ENCODE measurements at regions of chr18 and their contacts with region 1.

Region 1: GRCh38 chr18:46155641-46156051 is 51.5 kb downstream of the HAUS1 start:
- DNase-seq: peak; percentile 75 to 99
- H3K4me3 ChIP-seq: no peak overlapping the region
- H3K27ac ChIP-seq: peak overlapping the region; percentile 85
- H3K4me1 ChIP-seq: peaks cover 94% of the 10 kb centered on the region
- H3K27me3 ChIP-seq: no peaks in the 10 kb centered on the region
- CTCF ChIP-seq: no peak

Region 2: DNA sequence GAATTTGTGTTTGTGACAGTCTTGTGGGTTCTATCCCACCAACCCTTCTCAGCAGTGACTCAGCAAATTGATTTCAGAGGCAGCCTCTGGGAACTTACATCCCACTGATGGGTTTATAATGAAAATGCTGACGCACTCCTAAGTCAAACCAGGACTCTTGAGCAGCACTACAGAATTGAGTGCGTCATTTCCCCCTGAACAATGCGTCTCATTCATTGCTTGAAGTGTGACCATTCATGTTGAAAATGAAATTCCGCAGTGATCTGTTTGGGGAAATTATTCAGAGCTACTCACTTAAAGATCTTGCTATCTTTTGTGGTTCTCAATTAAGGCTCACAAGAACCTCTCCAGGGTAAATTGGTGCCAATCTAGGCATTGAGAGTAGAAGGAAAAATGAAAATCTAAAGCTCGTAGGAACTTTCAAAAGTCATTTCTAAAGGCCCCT is 958.1 kb before region 1 on chr18:
- CTCF ChIA-PET with region 1: no interaction called
- POLR2A ChIA-PET with region 1: no interaction called
- intact Hi-C with region 1: no loop called
- DNase-seq: no peak
- H3K4me3 ChIP-seq: no peak overlapping the region
- H3K27ac ChIP-seq: no peak overlapping the region
- H3K4me1 ChIP-seq: no peaks in the 10 kb centered on the region
- H3K27me3 ChIP-seq: no peaks in the 10 kb centered on the region
- CTCF ChIP-seq: no peak

Region 3: DNA sequence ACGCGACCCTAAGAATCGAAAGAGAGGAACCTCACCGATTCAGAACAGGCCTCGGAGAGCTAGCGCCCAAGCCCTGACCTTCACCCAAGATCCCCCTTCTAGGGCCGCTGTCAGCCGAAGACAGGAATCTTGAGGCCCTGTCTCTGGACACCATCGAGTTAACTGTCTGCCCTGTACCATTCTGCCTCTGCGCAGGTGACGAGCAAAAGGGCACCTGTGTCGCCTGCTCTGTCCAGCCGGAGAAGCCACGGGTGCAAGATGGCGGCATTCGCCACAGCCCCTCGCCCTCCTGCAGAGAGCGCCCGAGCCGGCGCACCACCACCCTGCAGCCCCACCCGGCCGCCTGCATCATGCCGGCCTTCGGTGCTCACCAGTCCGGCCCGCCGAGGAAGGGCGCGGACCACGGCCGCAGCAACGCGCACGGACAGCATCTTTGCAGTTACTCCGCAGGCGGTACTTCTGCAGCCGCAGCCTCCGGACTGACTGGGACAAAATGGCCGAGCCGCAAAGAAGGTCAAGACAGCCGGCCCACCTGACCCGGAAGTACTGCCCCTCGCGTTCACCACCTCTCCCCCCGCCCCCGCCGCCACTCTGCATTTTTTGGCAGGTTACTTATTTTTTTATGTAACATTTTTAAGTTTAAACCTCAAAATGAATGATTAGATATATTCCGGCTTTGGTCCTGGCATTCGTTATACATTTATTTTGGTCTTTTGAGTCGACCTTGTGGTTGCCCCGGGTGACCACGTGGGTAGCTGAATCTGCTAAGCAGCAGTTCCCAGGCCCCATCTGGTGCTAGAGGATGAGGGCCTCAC is 57.6 kb before region 1 on chr18 and contains the start of gene ATP5F1A:
- CTCF ChIA-PET with region 1: no interaction called
- POLR2A ChIA-PET with region 1: interaction called, 27 read pairs
- intact Hi-C with region 1: no loop called
- DNase-seq: peak; percentile 66 to 72
- H3K4me3 ChIP-seq: peak within 1 kb of the TSS; percentile 100
- H3K27ac ChIP-seq: peak within 1 kb of the TSS; percentile 55
- H3K4me1 ChIP-seq: peaks cover 21% of the 10 kb centered on the region
- H3K27me3 ChIP-seq: no peaks in the 10 kb centered on the region
- CTCF ChIP-seq: no peak
- total RNA-seq, gene ATP5F1A: 232 and 242 TPM in 2 replicates

Region 4: GRCh38 chr18:46184727-46185126 is 29.1 kb after region 1 on chr18:
- CTCF ChIA-PET with region 1: no interaction called
- POLR2A ChIA-PET with region 1: no interaction called
- intact Hi-C with region 1: no loop called
- DNase-seq: no peak
- H3K4me3 ChIP-seq: no peak overlapping the region
- H3K27ac ChIP-seq: no peak overlapping the region
- H3K4me1 ChIP-seq: peaks cover 20% of the 10 kb centered on the region
- H3K27me3 ChIP-seq: no peaks in the 10 kb centered on the region
- CTCF ChIP-seq: no peak

Region 5: GRCh38 chr18:46199515-46200147 is 44.0 kb after region 1 on chr18:
- CTCF ChIA-PET with region 1: no interaction called
- POLR2A ChIA-PET with region 1: interaction called, 9 read pairs
- intact Hi-C with region 1: loop called (anchors 2 kb)
- DNase-seq: peak; percentile 44 to 91
- H3K4me3 ChIP-seq: no peak overlapping the region
- H3K27ac ChIP-seq: peak overlapping the region; percentile 49
- H3K4me1 ChIP-seq: peaks cover 25% of the 10 kb centered on the region
- H3K27me3 ChIP-seq: no peaks in the 10 kb centered on the region
- CTCF ChIP-seq: no peak

Region 6: GRCh38 chr18:46293761-46294228 is 138.1 kb after region 1 on chr18:
- CTCF ChIA-PET with region 1: interaction called, 4 read pairs
- POLR2A ChIA-PET with region 1: interaction called, 3 read pairs
- intact Hi-C with region 1: loop called (anchors 1 kb)
- DNase-seq: peak; percentile 85 to 98
- H3K4me3 ChIP-seq: peak overlapping the region; percentile 45; the same call in 1 of the 2 replicates
- H3K27ac ChIP-seq: peak overlapping the region; percentile 97
- H3K4me1 ChIP-seq: peaks cover 75% of the 10 kb centered on the region
- H3K27me3 ChIP-seq: no peaks in the 10 kb centered on the region
- CTCF ChIP-seq: no peak

Region 7: GRCh38 chr18:46469186-46469915 is 313.7 kb after region 1 on chr18:
- CTCF ChIA-PET with region 1: no interaction called
- POLR2A ChIA-PET with region 1: no interaction called
- intact Hi-C with region 1: loop called (anchors 5 kb)
- DNase-seq: peak; percentile 55 to 89
- H3K4me3 ChIP-seq: no peak overlapping the region
- H3K27ac ChIP-seq: peak overlapping the region; percentile 71
- H3K4me1 ChIP-seq: peaks cover 38% of the 10 kb centered on the region
- H3K27me3 ChIP-seq: no peaks in the 10 kb centered on the region
- CTCF ChIP-seq: no peak

Region 8: GRCh38 chr18:47150029-47150823 is 994.6 kb after region 1 on chr18 and contains the start of gene HDHD2:
- CTCF ChIA-PET with region 1: no interaction called
- POLR2A ChIA-PET with region 1: interaction called, 15 read pairs
- intact Hi-C with region 1: no loop called
- DNase-seq: peak; percentile 71 to 72
- H3K4me3 ChIP-seq: peak within 1 kb of the TSS; percentile 97
- H3K27ac ChIP-seq: peak within 1 kb of the TSS; percentile 60
- H3K4me1 ChIP-seq: peaks cover 16% of the 10 kb centered on the region
- H3K27me3 ChIP-seq: no peaks in the 10 kb centered on the region
- CTCF ChIP-seq: no peak
- total RNA-seq, gene HDHD2: 22.8 and 24.4 TPM in 2 replicates